Astrocyte of the cerebellum (primary cell): ENCODE measurements at regions of chr2 and their contacts with region 1.

Region 1: GRCh38 chr2:201118121-201118960 is 2.4 kb downstream of the CFLAR start:
- DNase-seq: peak; percentile 52
- H3K4me3 ChIP-seq: peak overlapping the region; percentile 60
- CTCF ChIP-seq: peak; percentile 51

Region 2: GRCh38 chr2:201151127-201151981 is 33.0 kb after region 1 on chr2:
- in situ Hi-C with region 1: loop called (anchors 5 kb)
- DNase-seq: peak; percentile 63
- H3K4me3 ChIP-seq: no peak overlapping the region
- CTCF ChIP-seq: no peak